Aorta (tissue), 5 donors: ENCODE measurements at regions of chr1 and their contacts with region 1.

Region 1: GRCh38 chr1:57024855-57025254 is 59.0 kb upstream of the C8B start:
- DNase-seq: no peak
- ATAC-seq: no peak
- H3K4me3 ChIP-seq: no peak overlapping the region
- H3K27ac ChIP-seq: no peak overlapping the region
- H3K4me1 ChIP-seq: no peaks in the 10 kb centered on the region
- H3K27me3 ChIP-seq: no peaks in the 10 kb centered on the region

Region 2: GRCh38 chr1:56948403-56949023 is 76.3 kb before region 1 on chr1:
- intact Hi-C with region 1: loop called in 1 of 2 experiments (anchors 10 kb)
- DNase-seq: no peak
- ATAC-seq: no peak
- H3K4me3 ChIP-seq: no peak overlapping the region
- H3K27ac ChIP-seq: no peak overlapping the region
- H3K4me1 ChIP-seq: no peaks in the 10 kb centered on the region
- H3K27me3 ChIP-seq: no peaks in the 10 kb centered on the region

Region 3: GRCh38 chr1:57072401-57073110 is 47.7 kb after region 1 on chr1:
- intact Hi-C with region 1: no loop called
- DNase-seq: no peak
- ATAC-seq: no peak
- H3K4me3 ChIP-seq: no peak overlapping the region
- H3K27ac ChIP-seq: no peak overlapping the region
- H3K4me1 ChIP-seq: no peaks in the 10 kb centered on the region
- H3K27me3 ChIP-seq: no peaks in the 10 kb centered on the region